ENCODE measurements at regions of chr12 and their contacts with region 1.

Region 1: DNA sequence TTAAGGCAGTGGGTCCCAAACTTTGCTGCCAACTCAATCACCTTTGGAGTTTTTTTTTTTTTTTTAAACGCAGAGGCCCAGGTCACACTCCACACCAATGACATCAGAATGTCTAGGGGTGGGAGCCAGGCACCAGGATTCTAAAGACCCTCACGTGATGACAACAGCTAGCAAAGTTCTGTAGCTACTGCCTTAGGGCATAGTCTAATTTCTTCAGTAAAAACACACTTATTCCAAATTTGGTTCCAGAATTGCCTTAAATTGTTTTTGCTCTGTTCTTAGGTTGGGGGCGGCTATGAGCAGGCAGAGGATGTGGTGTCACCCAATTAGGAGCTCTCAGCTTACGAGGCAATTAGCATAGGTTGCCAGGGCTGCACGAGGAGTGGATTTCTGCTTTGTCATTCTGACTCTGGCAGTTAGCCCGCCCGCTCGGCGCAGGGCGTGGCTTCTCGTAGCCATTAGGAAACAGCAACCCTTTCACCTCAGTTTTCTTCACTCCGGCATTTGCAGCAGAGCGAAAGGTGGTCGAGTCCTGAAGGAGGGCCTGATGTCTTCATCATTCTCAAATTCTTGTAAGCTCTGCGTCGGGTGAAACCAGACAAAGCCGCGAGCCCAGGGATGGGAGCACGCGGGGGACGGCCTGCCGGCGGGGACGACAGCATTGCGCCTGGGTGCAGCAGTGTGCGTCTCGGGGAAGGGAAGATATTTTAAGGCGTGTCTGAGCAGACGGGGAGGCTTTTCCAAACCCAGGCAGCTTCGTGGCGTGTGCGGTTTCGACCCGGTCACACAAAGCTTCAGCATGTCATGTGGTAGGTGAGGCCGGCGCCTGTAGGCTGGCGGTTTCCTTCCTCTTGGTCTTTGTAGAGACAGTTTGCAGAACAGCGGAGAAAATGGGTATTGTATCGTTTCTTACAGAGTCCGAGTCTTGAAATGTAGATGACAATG is 16.7 kb upstream of the EID3 start:
- DNase-seq: peak; percentile 83 to 97 (median 92)

Region 2: DNA sequence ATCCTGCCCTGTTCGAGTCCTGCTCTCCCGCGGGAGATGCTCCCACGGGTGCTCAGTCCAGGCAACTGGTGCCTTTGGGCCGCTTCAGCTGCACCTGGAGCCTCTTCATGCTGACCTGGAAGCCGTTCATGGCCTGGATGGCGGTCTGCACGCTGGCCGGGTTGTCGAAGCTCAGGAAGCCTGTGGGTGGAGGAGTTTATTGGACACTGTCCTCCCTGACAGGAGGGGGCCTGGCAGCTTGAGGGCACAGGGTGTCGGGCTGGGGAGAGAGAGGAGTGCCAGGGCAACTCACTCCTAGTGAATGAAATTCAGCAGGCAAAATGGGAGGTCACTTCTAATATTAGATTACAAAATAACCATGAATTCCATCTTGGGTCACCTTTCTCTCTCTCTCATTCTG is 139.5 kb before region 1 on chr12:
- intact Hi-C with region 1: loop called (anchors 10 kb)
- DNase-seq: no peak

Region 3: GRCh38 chr12:104215638-104216297 is 71.0 kb before region 1 on chr12 and contains the start of gene TXNRD1:
- intact Hi-C with region 1: loop called (anchors 10 kb)
- DNase-seq: peak; percentile 33 to 88 (median 69)

Measured in head of caudate nucleus (tissue), 42 donors.